B cell (primary cell): ENCODE measurements at regions of chr10 and their contacts with region 1.

Region 1: GRCh38 chr10:73848821-73849489 is 25.4 kb downstream of the CAMK2G start:
- DNase-seq: peak; percentile 96
- ATAC-seq: peak; percentile 100
- H3K4me3 ChIP-seq: no peak overlapping the region
- H3K4me3 Mint-ChIP-seq: peak overlapping the region; percentile 12
- H3K27ac ChIP-seq: peak overlapping the region; percentile 51 to 71
- H3K27ac Mint-ChIP-seq: peak overlapping the region; percentile 47
- H3K4me1 ChIP-seq: peaks cover 7 to 17% of the 10 kb centered on the region in 2 donors
- H3K4me1 Mint-ChIP-seq: peaks cover 13% of the 10 kb centered on the region
- H3K27me3 ChIP-seq: no peaks in the 10 kb centered on the region
- H3K27me3 Mint-ChIP-seq: no peaks in the 10 kb centered on the region
- CTCF ChIP-seq: peak; percentile 99

Region 2: GRCh38 chr10:73785221-73785720 is 63.7 kb before region 1 on chr10 and contains the start of gene ZSWIM8:
- CTCF ChIA-PET with region 1: no interaction called
- POLR2A ChIA-PET with region 1: no interaction called
- intact Hi-C with region 1: no loop called
- DNase-seq: peak; percentile 95
- ATAC-seq: peak; percentile 87
- H3K4me3 ChIP-seq: peak within 1 kb of the TSS; percentile 56 to 97 (median 85)
- H3K4me3 Mint-ChIP-seq: peak within 1 kb of the TSS; percentile 96
- H3K27ac ChIP-seq: peak within 1 kb of the TSS; percentile 53 to 74
- H3K27ac Mint-ChIP-seq: peak within 1 kb of the TSS; percentile 98
- H3K4me1 ChIP-seq: peaks cover 32 to 46% of the 10 kb centered on the region in 2 donors
- H3K4me1 Mint-ChIP-seq: peaks cover 48% of the 10 kb centered on the region
- H3K27me3 ChIP-seq: no peaks in the 10 kb centered on the region
- H3K27me3 Mint-ChIP-seq: no peaks in the 10 kb centered on the region
- CTCF ChIP-seq: no peak
- total RNA-seq, gene ZSWIM8: 110 and 113 TPM in 2 replicates

Region 3: DNA sequence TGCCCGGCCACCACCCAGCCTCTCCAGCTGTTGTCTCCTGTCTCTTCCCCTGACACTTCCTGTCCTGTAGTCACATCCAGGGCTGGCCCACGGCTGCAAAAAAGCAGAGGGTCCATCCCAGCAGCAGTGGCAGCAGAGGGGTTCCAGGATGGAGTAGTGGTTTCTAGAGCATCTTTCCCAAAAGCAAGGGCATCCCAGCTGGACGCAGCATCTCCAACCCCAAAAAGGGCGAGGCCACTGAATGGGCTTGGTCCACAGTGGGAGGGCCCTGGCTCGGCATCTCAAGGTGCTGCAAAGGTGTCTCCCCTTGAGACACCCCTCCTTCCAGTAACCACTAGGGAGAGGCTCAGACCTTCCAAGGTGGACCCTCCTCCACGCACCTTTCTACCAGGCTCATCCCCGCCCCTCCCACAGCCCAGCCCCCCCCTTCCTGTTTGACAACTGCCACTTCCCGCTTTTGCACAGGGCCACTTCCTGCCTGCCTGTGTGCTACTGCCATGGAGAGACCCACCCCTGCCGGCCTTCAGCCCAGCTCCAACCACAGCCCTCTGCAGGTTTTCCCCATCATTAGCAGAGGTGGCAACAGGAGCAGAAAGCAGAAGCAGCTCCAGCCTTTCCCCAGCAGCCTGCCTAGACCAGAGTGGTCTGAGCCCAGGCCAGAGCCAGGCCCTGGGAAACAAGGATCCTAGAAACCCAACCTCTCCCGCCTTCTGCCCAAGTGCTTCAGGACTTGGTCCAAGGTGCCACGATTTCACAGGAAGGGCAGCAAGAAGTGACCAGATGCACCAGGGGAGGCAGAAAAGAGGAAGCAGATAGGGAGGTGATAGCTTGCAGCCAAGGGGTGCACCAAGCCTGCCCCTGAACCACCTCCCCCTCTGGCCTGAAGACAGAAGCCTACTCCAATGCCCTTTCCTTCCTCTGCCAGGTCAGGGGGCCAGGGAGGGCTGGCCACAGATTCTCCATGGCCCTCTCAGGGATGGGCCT is 16.8 kb after region 1 on chr10:
- CTCF ChIA-PET with region 1: interaction called, 9 read pairs
- POLR2A ChIA-PET with region 1: interaction called, 3 read pairs
- intact Hi-C with region 1: loop called (anchors 2 kb)
- DNase-seq: peak; percentile 84
- ATAC-seq: peak; percentile 92
- H3K4me3 ChIP-seq: peak overlapping the region; percentile 19 to 58 (median 42)
- H3K4me3 Mint-ChIP-seq: peak overlapping the region; percentile 81
- H3K27ac ChIP-seq: peak overlapping the region; percentile 68 to 81
- H3K27ac Mint-ChIP-seq: peak overlapping the region; percentile 96
- H3K4me1 ChIP-seq: peaks cover 36 to 45% of the 10 kb centered on the region in 2 donors
- H3K4me1 Mint-ChIP-seq: peaks cover 57% of the 10 kb centered on the region
- H3K27me3 ChIP-seq: no peaks in the 10 kb centered on the region
- H3K27me3 Mint-ChIP-seq: no peaks in the 10 kb centered on the region
- CTCF ChIP-seq: no peak

Region 4: GRCh38 chr10:73874267-73875138 is 25.5 kb after region 1 on chr10 and contains the start of gene CAMK2G:
- CTCF ChIA-PET with region 1: interaction called, 498 read pairs
- POLR2A ChIA-PET with region 1: interaction called, 11 read pairs
- intact Hi-C with region 1: loop called (anchors 1 kb)
- DNase-seq: peak; percentile 92
- ATAC-seq: peak; percentile 87
- H3K4me3 ChIP-seq: peak within 1 kb of the TSS; percentile 81 to 98 (median 92)
- H3K4me3 Mint-ChIP-seq: peak within 1 kb of the TSS; percentile 95
- H3K27ac ChIP-seq: peak within 1 kb of the TSS; percentile 71 to 74
- H3K27ac Mint-ChIP-seq: peak within 1 kb of the TSS; percentile 85
- H3K4me1 ChIP-seq: peaks cover 18 to 39% of the 10 kb centered on the region in 2 donors
- H3K4me1 Mint-ChIP-seq: peaks cover 46% of the 10 kb centered on the region
- H3K27me3 ChIP-seq: no peaks in the 10 kb centered on the region
- H3K27me3 Mint-ChIP-seq: no peaks in the 10 kb centered on the region
- CTCF ChIP-seq: no peak
- total RNA-seq, gene CAMK2G: 42.7 and 45.1 TPM in 2 replicates

Region 5: GRCh38 chr10:73915206-73915851 is 66.4 kb after region 1 on chr10:
- CTCF ChIA-PET with region 1: no interaction called
- POLR2A ChIA-PET with region 1: no interaction called
- intact Hi-C with region 1: no loop called
- DNase-seq: no peak
- ATAC-seq: no peak
- H3K4me3 ChIP-seq: no peak overlapping the region
- H3K4me3 Mint-ChIP-seq: no peak overlapping the region
- H3K27ac ChIP-seq: no peak overlapping the region
- H3K27ac Mint-ChIP-seq: no peak overlapping the region
- H3K4me1 ChIP-seq: peaks cover 19 to 26% of the 10 kb centered on the region in 2 donors
- H3K4me1 Mint-ChIP-seq: peaks cover 24% of the 10 kb centered on the region
- H3K27me3 ChIP-seq: peaks cover 0 to 16% (median 4%) of the 10 kb centered on the region in 4 experiments
- H3K27me3 Mint-ChIP-seq: peaks cover 12% of the 10 kb centered on the region
- CTCF ChIP-seq: no peak